Posterior cingulate gyrus (tissue), 11 donors: ENCODE measurements at regions of chr4 and their contacts with region 1.

Region 1: GRCh38 chr4:73446336-73446938 is 10.4 kb downstream of the AFP start:
- DNase-seq: no peak

Region 2: GRCh38 chr4:73341454-73341853 is 105.0 kb before region 1 on chr4:
- intact Hi-C with region 1: loop called (anchors 1 kb)
- DNase-seq: peak in 4 of 10 donors; percentile 37 to 65 (median 56)

Region 3: DNA sequence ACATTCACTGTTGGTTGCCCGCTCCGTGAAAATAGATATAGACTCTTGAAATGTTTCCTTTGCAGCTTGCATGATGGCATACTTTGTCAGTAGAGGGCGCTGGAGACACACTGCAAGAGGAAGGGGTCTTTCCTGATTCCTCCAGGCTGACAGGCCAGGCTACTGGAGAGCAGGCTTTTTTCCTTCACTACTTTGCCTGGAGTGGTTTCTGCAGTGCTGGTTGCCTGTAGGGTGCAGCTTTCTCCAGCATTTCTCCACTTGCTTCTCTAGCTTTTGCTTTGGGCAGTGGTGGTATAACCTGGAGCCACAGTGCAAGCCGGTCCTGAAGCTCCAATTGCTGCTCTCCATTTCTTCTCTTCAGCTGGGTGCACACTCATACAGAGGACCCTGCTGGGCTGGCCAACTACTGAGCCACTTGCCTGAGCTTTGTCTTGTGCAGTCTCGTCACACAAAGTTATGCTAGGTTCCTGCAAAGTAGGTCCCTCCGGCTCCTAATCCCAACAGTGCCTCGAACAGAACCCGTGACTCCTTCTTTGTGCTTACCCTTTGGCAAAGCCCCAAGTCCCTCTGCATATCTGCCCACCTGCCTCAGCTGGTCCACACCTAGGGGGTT is 127.5 kb after region 1 on chr4:
- intact Hi-C with region 1: no loop called
- DNase-seq: peak in 7 of 10 donors; percentile 7 to 62 (median 49)